ENCODE measurements at regions of chr2 and their contacts with region 1.

Region 1: DNA sequence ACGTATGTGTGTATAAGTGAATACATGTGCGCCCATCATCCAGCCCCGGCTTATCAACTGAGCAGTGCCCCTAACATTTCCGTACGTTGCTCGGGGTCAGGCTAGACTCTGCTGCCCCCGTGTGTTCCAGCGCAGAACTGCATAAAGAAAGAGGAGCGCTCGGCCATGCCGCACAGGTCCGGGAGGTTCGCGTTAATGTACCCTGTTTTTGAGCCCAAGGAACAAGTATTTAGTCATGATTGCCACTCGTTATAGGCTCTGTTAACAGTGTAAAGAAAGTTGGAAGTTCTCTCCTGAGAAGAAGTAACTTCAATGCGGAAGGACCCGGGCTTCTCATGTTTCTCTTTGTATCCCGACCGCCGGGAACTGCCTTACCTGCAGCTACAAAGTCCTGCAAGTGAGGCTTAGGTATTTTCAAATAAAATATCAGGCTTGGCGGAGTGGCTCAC is 55.7 kb downstream of the CD8B2 start:
- DNase-seq: peak; percentile 60 to 78
- ATAC-seq: peak; percentile 85 to 94 (median 94)
- H3K4me3 ChIP-seq: peak overlapping the region; percentile 53
- H3K27ac ChIP-seq: no peak overlapping the region
- H3K4me1 ChIP-seq: no peaks in the 10 kb centered on the region
- H3K27me3 ChIP-seq: peaks cover 0 to 4% (median 0%) of the 10 kb centered on the region in 3 donors
- CTCF ChIP-seq: peak; percentile 96

Region 2: GRCh38 chr2:106193977-106194778 is 348.7 kb before region 1 on chr2 and contains the start of gene UXS1:
- intact Hi-C with region 1: loop called in 1 of 2 experiments (anchors 10 kb)
- DNase-seq: peak; percentile 98 to 99
- ATAC-seq: peak; percentile 92 to 96 (median 94)
- H3K4me3 ChIP-seq: peak within 1 kb of the TSS; percentile 96
- H3K27ac ChIP-seq: peak within 1 kb of the TSS; percentile 89
- H3K4me1 ChIP-seq: peaks cover 19% of the 10 kb centered on the region
- H3K27me3 ChIP-seq: no peaks in the 10 kb centered on the region
- CTCF ChIP-seq: no peak
- total RNA-seq, gene UXS1: 12.2 to 24.7 (median 21.1) TPM

Region 3: DNA sequence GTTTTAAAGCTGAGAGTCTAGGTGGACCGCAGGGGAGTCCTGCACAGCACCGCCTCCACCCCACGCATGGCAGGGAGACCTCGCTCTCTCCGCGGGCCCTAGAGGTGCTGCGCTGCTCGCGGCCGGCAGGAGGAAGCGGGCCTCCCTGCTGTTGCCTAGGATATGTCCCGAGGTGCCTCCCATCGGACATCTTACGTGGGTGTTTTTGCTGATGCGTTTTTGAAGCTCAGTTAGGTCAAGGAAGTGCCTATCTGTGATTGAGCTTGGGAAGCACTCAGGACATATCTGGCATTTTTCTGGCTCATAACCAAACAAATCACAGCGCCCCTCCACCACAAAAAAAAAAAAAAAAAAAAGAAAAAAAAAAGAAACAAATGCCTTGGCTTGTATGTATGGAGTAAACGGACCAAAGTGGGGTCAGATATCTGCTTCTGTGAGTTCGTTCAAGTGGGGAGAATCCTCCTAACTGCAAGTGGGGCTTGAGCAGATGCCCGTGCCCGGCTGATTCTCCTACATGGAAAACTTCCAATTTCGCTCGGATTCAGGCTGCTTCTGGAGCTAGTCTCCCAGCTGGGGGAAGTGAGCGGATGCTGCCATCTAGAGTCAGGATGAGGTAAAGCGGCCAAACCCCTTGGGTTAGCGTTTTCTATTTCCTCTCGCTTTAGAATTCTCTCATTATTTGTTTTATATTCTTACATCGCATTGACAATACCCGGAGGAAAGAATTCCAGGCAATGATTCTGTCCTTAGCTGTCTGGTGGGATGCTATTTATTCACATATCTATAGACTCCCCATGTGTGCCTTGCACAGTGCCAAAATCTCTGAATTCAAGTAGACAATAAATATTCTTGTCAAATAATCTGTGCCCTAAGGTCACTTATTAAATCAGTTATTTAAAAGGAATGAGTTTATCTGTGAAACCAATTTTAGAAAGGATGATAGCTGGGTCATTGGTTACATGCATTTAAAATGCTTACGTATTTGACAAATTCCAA is 39.6 kb after region 1 on chr2:
- intact Hi-C with region 1: loop called in 1 of 2 experiments (anchors 2 kb)
- DNase-seq: peak; percentile 56 to 76
- ATAC-seq: peak; percentile 82 to 95 (median 86)
- H3K4me3 ChIP-seq: peak overlapping the region; percentile 27
- H3K27ac ChIP-seq: no peak overlapping the region
- H3K4me1 ChIP-seq: no peaks in the 10 kb centered on the region
- H3K27me3 ChIP-seq: peaks cover 0 to 18% (median 9%) of the 10 kb centered on the region in 3 donors
- CTCF ChIP-seq: peak; percentile 83

Measured in psoas muscle (tissue), 8 donors.